IMR-90 (cell line): ENCODE measurements at regions of chr12 and their contacts with region 1.

Region 1: DNA sequence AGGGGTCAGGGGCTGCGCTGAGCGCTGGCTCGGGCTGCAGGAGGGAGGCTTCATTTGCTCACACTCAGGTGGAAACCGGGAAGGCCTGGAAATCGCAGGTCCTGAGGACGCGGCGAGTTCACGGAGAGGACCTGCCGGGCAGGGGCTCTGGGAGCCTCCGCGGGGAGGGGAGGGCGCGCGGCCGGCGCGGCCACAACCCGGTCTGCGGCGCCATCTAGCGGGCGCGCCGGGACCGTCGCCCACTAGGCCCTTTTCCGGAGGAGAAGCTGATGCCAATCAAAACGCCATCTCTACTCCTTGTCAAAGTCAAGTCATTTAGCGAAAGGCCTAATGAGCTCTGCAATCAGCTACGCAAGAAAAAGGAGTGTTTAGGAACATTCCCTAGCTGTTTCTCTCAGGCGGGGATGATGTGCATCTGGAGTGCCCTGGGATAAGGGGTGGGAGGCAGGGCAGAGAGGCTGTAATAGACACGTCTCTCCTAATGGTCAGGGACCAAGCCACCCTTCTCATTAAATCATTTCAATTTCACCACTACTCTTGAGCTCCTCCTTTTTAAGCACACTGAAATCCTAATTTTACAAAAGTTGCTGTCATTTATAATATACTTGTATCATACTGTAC is 885.8 kb upstream of the TMEM132C start:
- DNase-seq: no peak
- ATAC-seq: peak; percentile 54; the same call in 1 of the 2 replicates
- H3K4me3 ChIP-seq: peak overlapping the region; percentile 50; the same call in 1 of the 2 replicates
- H3K27ac ChIP-seq: no peak overlapping the region
- H3K4me1 ChIP-seq: no peaks in the 10 kb centered on the region
- H3K27me3 ChIP-seq: no peaks in the 10 kb centered on the region
- CTCF ChIP-seq: peak; percentile 68
- POLR2A ChIP-seq: no peak
- RAD21 ChIP-seq: peak; percentile 77

Region 2: DNA sequence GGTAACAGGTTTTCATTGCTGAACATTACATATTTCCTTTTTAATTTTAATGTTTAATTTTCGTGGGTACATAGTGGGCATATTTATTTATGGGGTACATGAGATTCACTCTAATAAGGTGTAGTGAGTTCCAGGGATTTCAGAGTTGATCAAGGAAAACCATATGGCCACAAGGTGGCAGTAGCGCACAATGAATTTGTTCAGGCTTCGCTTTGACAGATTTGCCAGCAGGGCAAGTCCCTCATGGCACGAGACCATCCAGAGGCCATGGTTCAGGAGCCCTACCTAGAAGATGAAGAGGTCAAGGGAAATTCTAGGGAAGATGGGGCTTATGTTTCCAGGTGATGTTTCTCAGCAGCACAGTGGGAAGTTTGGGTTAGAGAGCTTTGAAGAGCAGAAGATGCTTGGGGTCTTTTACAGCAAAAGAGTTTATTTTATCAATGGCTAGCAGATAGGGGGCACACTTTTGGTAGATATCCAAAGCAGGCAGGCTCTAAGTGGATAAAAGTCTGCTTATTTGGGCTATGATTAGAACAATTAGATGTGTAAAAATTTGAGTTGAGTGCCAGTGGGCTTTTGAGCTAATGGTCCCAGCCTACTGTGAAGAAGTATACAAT is 1311.5 kb before region 1 on chr12:
- CTCF ChIA-PET with region 1: no interaction called
- POLR2A ChIA-PET with region 1: no interaction called
- dilution Hi-C with region 1: no loop called
- in situ Hi-C with region 1: no loop called
- intact Hi-C with region 1: loop called (anchors 5 kb)
- DNase-seq: peak; percentile 13
- ATAC-seq: no peak
- H3K4me3 ChIP-seq: no peak overlapping the region
- H3K27ac ChIP-seq: no peak overlapping the region
- H3K4me1 ChIP-seq: no peaks in the 10 kb centered on the region
- H3K27me3 ChIP-seq: no peaks in the 10 kb centered on the region
- CTCF ChIP-seq: peak; percentile 34; the same call in 1 of the 2 replicates
- POLR2A ChIP-seq: no peak
- RAD21 ChIP-seq: peak; percentile 41

Region 3: DNA sequence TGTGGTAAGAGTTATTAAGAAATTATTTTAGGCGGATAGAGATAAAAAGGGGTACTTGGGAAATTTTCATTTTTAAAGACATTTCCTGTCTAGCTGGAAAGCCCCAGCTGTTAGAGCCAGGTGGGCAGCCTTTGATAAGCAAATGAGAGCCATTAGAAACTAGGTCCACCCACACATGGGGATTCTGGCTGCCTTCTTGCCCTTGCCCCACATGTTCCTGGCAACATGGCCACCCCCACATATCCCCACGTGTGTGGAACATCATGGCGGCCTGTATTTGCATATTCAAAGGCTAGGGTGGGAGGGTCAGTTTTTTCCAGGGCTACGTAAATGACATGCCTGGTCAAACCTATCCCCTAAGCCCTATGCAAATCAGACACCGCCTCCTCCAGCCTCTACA is 933.8 kb before region 1 on chr12:
- CTCF ChIA-PET with region 1: no interaction called
- POLR2A ChIA-PET with region 1: no interaction called
- dilution Hi-C with region 1: no loop called
- in situ Hi-C with region 1: no loop called
- intact Hi-C with region 1: no loop called
- DNase-seq: no peak
- ATAC-seq: no peak
- H3K4me3 ChIP-seq: no peak overlapping the region
- H3K27ac ChIP-seq: no peak overlapping the region
- H3K4me1 ChIP-seq: no peaks in the 10 kb centered on the region
- H3K27me3 ChIP-seq: no peaks in the 10 kb centered on the region
- CTCF ChIP-seq: no peak
- POLR2A ChIP-seq: no peak
- RAD21 ChIP-seq: no peak

Region 4: GRCh38 chr12:127108360-127109215 is 272.6 kb before region 1 on chr12:
- CTCF ChIA-PET with region 1: interaction called, 4 read pairs
- POLR2A ChIA-PET with region 1: no interaction called
- dilution Hi-C with region 1: no loop called
- in situ Hi-C with region 1: no loop called
- intact Hi-C with region 1: loop called (anchors 2 kb)
- DNase-seq: peak; percentile 42
- ATAC-seq: no peak
- H3K4me3 ChIP-seq: no peak overlapping the region
- H3K27ac ChIP-seq: no peak overlapping the region
- H3K4me1 ChIP-seq: no peaks in the 10 kb centered on the region
- H3K27me3 ChIP-seq: no peaks in the 10 kb centered on the region
- CTCF ChIP-seq: peak; percentile 51
- POLR2A ChIP-seq: no peak
- RAD21 ChIP-seq: peak; percentile 61

Region 5: DNA sequence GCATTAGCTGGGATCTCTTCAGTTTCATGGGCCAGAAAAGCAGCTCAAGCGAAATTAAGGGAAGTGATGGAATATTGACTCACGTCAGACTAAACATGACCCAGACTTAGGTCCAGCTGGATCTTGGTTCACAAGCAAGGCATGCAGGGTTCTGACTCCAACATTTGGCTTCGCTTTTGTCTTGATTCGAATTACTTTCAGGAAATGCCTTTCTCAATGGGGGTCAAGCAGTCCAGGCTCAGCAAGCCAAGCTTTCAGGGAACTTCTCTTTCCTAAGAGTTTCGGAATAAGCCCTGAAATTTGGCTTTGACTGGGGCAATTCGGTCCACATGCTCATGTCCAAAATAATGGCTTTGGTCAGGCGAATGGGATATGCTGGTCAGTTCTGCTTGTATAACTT is 207.1 kb after region 1 on chr12:
- CTCF ChIA-PET with region 1: no interaction called
- POLR2A ChIA-PET with region 1: interaction called, 10 read pairs
- dilution Hi-C with region 1: no loop called
- in situ Hi-C with region 1: no loop called
- intact Hi-C with region 1: no loop called
- DNase-seq: peak; percentile 90
- ATAC-seq: peak; percentile 65
- H3K4me3 ChIP-seq: no peak overlapping the region
- H3K27ac ChIP-seq: no peak overlapping the region
- H3K4me1 ChIP-seq: peaks cover 3% of the 10 kb centered on the region; the same call in 1 of the 2 replicates
- H3K27me3 ChIP-seq: no peaks in the 10 kb centered on the region
- CTCF ChIP-seq: no peak
- POLR2A ChIP-seq: no peak
- RAD21 ChIP-seq: no peak

Region 6: DNA sequence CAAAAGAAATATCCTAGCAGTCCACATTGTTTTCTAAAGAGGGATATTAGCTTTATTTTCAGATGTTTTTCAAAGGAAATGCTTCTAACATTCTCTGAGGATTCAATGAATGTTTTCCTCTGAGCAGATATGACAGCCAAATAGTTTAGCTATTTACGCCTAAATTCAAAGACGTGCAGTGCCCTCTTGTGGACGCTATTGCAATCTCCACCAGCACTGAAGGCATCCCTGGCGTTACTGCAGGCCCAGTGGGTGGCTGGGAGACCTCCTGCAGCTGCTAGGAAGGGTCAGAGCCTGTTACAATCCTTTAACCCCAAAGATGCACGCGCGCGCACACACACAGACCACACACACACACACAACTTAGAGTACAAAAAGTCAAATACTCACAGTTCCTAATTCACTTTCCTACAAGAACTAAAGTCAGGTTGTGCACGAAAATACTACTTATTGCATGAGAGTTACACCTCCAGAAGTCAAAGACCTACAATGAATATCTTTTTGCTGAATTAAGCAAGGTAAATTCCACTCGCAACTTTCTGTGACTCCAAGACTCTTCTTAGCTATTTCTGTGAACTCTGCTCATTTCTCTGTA is 296.5 kb after region 1 on chr12:
- CTCF ChIA-PET with region 1: interaction called, 4 read pairs
- POLR2A ChIA-PET with region 1: no interaction called
- dilution Hi-C with region 1: no loop called
- in situ Hi-C with region 1: no loop called
- intact Hi-C with region 1: loop called (anchors 5 kb)
- DNase-seq: peak; percentile 70
- ATAC-seq: peak; percentile 90
- H3K4me3 ChIP-seq: no peak overlapping the region
- H3K27ac ChIP-seq: no peak overlapping the region
- H3K4me1 ChIP-seq: no peaks in the 10 kb centered on the region
- H3K27me3 ChIP-seq: no peaks in the 10 kb centered on the region
- CTCF ChIP-seq: peak; percentile 65
- POLR2A ChIP-seq: no peak
- RAD21 ChIP-seq: peak; percentile 79